Activated CD8-positive, alpha-beta T cell treated with anti-CD3 and anti-CD28 coated beads, Interleukin-2, amount 10 ng/mL, durations not matched to agents 7 days and 5 days (primary cell): ENCODE measurements at regions of chr20 and their contacts with region 1.

Region 1: DNA sequence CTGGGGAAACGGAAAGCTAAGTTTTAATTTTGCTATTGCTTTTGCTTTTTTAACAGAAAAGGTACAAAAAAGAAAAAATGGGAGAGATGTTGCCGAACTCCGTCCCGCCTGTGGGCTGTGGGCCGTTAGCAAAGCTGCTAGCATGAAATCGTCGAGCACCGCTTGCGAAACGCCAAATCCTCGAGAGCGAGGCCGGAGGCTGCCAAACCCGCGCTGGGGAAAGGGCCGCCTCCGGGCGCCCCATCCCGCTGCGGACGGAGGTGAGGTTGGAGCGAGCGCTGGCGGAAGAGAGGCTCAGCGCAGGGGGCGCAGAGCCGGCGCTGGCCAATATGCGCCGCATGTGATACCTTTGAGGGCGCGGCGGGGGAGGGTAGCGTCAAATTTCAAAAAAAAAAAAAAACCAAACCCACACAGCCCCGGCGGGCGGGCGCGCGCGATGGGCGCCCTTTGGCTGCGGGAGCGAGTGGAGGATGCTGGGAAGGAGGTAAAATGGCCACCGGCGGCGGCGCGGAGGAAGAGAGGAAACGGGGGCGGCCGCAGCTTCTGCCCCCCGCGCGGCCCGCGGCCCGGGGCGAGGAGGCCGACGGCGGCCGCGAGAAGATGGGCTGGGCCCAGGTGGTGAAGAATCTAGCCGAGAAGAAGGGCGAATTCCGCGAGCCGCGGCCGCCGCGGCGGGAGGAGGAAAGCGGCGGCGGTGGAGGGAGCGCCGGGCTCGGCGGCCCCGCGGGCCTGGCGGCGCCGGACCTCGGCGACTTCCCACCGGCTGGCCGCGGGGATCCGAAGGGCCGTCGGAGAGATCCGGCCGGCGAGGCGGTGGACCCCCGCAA is at the start of gene ZCCHC3:
- DNase-seq: peak; percentile 89
- ATAC-seq: peak; percentile 87
- H3K4me3 Mint-ChIP-seq: peak within 1 kb of the TSS; percentile 99
- H3K27ac Mint-ChIP-seq: peak within 1 kb of the TSS; percentile 99
- H3K4me1 Mint-ChIP-seq: peaks cover 54% of the 10 kb centered on the region
- H3K27me3 Mint-ChIP-seq: no peaks in the 10 kb centered on the region
- total RNA-seq, gene ZCCHC3: 28.4 to 29.0 TPM

Region 2: GRCh38 chr20:278607-279571 is 18.4 kb before region 1 on chr20:
- CTCF ChIA-PET with region 1: no interaction called
- POLR2A ChIA-PET with region 1: no interaction called
- DNase-seq: no peak
- ATAC-seq: no peak
- H3K4me3 Mint-ChIP-seq: peak overlapping the region; percentile 34
- H3K27ac Mint-ChIP-seq: no peak overlapping the region
- H3K4me1 Mint-ChIP-seq: no peaks in the 10 kb centered on the region
- H3K27me3 Mint-ChIP-seq: no peaks in the 10 kb centered on the region

Region 3: GRCh38 chr20:309841-310644 is 12.7 kb after region 1 on chr20:
- CTCF ChIA-PET with region 1: interaction called, 7 read pairs
- POLR2A ChIA-PET with region 1: interaction called, 14 read pairs
- DNase-seq: peak; percentile 88
- ATAC-seq: peak; percentile 100
- H3K4me3 Mint-ChIP-seq: peak overlapping the region; percentile 66
- H3K27ac Mint-ChIP-seq: peak overlapping the region; percentile 67
- H3K4me1 Mint-ChIP-seq: peaks cover 13% of the 10 kb centered on the region
- H3K27me3 Mint-ChIP-seq: no peaks in the 10 kb centered on the region

Region 4: DNA sequence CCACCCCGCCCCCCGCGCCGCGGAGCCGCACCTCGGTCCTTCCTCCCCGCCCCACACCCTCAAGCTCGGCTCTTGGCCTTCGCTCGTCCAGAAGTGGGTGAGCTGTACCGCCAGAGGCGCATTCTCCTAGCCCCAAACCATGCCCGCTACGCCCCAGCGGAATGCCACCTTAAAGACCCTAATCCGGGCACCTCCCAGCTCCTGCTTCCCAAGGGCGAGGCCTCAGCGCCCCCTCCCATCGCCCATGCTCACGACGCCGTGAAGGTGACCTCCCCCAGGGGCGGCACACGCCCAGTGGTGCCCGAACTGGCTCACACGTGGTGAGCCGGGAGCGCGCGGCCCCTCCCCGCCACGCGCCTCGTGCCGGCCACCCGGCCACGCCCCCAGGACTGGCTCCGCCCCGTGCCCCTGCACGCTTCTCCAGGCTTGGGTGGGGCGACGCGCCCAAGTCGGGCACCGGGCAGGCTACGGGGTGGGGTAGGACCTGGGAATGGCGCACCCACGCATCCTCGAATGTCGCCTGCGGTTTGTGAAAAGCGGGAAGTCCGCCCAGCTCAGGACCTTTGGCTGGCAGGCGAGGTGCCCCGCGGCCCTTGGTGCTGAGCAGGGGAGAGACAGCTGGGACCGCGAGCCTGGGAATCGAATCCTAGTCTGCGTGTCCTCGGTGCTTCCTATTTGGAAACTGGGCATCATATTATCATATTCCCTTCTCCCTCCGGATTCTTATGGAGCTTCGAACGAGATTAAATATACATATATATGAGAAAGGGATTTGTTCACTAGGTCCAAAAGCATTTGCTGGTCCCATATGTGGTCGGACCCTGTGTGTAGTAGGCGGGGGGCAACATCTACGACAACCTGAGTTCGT is 27.1 kb after region 1 on chr20:
- CTCF ChIA-PET with region 1: interaction called, 32 read pairs
- POLR2A ChIA-PET with region 1: interaction called, 49 read pairs
- DNase-seq: peak; percentile 91
- ATAC-seq: peak; percentile 66
- H3K4me3 Mint-ChIP-seq: peak overlapping the region; percentile 87
- H3K27ac Mint-ChIP-seq: peak overlapping the region; percentile 90
- H3K4me1 Mint-ChIP-seq: peaks cover 40% of the 10 kb centered on the region
- H3K27me3 Mint-ChIP-seq: no peaks in the 10 kb centered on the region

Region 5: GRCh38 chr20:373171-373890 is 76.0 kb after region 1 on chr20:
- CTCF ChIA-PET with region 1: no interaction called
- POLR2A ChIA-PET with region 1: no interaction called
- DNase-seq: no peak
- ATAC-seq: no peak
- H3K4me3 Mint-ChIP-seq: no peak overlapping the region
- H3K27ac Mint-ChIP-seq: peak overlapping the region; percentile 35
- H3K4me1 Mint-ChIP-seq: peaks cover 35% of the 10 kb centered on the region
- H3K27me3 Mint-ChIP-seq: peaks cover 5% of the 10 kb centered on the region